Upper lobe of right lung (tissue), 1 donor: ENCODE measurements at regions of chr19 and their contacts with region 1.

Region 1: DNA sequence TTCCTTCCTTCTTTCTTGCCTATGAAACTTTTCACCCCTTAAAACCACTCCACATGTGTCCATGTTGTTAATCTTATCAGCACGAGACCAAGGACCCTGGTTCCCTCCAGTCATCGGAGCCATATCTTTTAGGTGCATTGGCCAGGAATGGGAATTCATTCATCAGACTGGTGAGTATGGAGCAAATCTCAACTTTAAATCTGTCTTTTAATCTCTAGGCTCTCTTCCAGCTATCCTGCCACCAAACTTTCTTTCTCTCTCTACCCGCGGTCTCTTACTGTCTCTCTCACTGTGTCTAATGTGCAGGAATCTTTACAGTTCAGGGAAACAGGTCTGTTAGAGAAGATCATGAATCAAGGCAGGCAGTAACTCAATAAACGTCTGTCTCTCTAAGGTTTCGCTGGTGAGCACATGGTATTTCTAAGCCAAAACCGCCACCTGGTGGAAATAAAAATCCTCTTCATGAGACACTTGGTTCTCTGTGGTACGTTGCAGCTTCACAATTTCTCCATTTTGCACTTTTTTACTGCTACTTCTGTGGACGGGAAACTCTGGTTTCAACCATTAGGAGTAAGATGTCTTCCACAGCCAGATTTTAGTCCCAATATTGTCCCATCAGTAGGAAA is 16.1 kb downstream of the LGALS16 start:
- DNase-seq: no peak
- ATAC-seq: peak; percentile 76
- H3K4me3 ChIP-seq: no peak overlapping the region
- H3K27ac ChIP-seq: no peak overlapping the region
- H3K4me1 ChIP-seq: no peaks in the 10 kb centered on the region
- H3K27me3 ChIP-seq: no peaks in the 10 kb centered on the region
- CTCF ChIP-seq: peak; percentile 50

Region 2: DNA sequence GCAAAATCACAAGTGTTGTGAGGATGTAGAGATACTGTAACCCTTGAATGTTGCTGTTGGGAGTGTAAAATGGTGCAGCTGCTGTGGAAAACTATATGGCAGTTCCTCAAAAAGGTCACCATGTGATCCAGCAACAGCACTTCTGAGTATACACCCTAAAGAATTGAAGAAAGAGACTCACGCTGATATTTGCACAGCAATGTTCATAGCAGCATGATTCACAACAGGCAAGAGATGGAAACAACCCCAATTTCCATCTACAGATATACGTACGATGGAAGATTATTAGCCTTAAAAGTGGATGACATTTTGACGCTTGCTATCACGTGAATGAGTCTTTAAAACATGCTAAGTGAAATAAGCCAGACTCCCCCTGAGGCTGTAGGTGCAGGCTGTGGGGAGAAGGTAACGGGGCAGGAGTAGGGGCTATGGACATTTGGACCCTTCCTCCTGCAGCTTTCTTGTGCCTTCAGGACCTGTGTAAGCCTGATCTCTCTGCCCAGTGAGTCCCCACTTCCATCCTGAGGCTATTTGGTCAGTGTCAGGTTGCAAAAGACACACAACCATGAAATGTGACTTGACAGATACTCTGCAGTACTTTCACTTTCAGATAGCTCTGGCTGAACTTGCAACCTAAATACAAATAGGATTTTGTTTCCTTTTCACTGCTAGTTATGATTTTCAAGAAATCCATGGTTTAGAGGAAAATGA is 114.3 kb before region 1 on chr19:
- intact Hi-C with region 1: loop called (anchors 10 kb)
- DNase-seq: no peak
- ATAC-seq: peak; percentile 80
- H3K4me3 ChIP-seq: no peak overlapping the region
- H3K27ac ChIP-seq: no peak overlapping the region
- H3K4me1 ChIP-seq: peaks cover 8% of the 10 kb centered on the region
- H3K27me3 ChIP-seq: no peaks in the 10 kb centered on the region
- CTCF ChIP-seq: no peak

Region 3: DNA sequence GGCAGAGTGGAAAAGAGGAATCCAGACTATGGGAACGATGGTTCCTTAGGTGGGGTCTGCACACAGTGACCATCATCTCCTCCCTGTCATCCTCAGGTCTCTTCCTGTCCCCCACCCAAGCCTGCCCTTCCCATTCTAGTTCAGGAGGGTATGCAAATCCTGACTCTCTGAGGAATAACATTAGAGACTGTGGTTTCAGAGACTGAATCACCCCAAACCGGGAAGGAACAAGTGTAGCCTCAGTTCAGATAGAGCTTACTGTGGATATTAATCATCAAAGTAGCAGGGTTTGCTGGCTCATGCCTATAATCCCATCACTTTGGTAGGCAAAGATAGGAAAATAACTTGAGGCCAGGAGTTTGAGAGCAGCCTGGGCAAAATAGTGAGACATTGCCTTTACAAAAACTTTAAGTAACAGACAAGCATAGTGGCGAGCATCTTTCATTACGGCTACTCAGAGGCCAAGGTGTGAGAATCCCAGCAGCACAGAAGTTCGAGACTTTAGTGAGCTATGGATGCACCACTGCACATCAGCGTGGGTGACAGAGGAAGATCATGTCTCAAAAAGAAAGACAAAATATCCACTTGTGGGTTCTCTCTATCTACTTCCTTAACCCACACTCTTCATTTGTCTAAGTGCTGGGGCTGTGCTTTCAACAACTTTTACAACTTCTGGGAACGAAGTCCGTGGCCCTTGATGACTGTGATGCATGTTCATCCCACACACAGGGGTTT is 88.8 kb before region 1 on chr19:
- intact Hi-C with region 1: no loop called
- DNase-seq: no peak
- ATAC-seq: no peak
- H3K4me3 ChIP-seq: no peak overlapping the region
- H3K27ac ChIP-seq: no peak overlapping the region
- H3K4me1 ChIP-seq: no peaks in the 10 kb centered on the region
- H3K27me3 ChIP-seq: no peaks in the 10 kb centered on the region
- CTCF ChIP-seq: no peak